ENCODE measurements at regions of chr3 and their contacts with region 1.

Region 1: GRCh38 chr3:73490453-73491286 is 134.1 kb downstream of the PDZRN3 start:
- DNase-seq: peak; percentile 65
- ATAC-seq: peak; percentile 83

Region 2: GRCh38 chr3:73341272-73341892 is 149.3 kb before region 1 on chr3:
- intact Hi-C with region 1: loop called (anchors 10 kb)
- DNase-seq: no peak
- ATAC-seq: peak; percentile 47

Region 3: DNA sequence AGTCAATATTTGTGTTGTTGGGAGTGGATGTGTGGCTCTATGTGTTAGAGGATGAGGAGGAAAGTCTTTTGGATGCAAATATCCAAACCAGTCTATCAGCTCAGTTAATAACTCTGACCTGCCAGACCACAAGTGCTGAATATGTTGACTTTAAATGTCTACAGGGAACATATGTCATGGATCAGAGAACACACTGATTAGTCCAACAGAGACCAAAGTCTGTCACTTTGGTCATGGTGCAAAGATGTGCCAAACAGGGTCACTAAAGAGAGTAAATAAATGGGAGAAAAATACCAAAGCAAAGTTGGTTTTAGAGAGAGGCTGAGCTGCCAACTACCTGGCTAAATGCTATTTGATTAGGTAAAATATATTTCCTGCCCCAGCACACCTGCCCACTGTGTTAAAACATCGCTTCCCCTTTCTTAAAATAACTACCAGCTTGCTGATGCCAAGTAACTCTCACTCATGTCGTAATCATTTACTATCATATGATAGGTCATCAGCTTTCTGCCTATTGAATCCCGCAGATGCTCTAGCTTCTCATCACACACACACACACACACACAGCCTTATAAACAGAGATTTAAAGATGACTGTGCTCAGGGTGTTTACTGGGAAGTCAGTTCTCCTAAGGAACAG is 39.2 kb before region 1 on chr3:
- intact Hi-C with region 1: loop called (anchors 5 kb)
- DNase-seq: no peak
- ATAC-seq: peak; percentile 22

Measured in Right ventricle myocardium inferior (tissue), 1 donor.